ENCODE measurements at regions of chr5 and their contacts with region 1.

Region 1: DNA sequence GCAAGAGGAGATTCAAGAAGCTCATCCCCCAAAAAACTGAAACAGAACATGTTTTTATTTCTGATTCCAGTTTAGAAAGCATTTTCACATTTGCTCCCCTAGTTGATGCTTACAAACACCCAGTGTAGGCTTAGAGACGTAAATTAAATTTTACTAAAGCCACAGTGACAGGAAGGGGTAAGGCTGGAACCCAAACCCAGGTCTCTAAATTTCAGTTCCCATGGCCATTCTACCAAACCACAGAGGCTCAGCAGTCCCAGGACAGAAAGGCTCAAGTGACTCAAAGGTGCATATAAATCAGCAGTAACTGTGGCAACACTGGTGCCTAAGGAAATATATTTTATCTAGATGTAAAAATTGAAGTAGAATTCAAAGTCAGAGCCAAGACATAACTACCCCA is 128.7 kb downstream of the CEP120 start:
- DNase-seq: no peak
- ATAC-seq: no peak
- H3K4me3 ChIP-seq: no peak overlapping the region
- H3K27ac ChIP-seq: peak overlapping the region in 1 of 2 donors; percentile 57
- H3K4me1 ChIP-seq: peaks cover 0 to 8% of the 10 kb centered on the region in 2 donors
- H3K27me3 ChIP-seq: no peaks in the 10 kb centered on the region

Region 2: GRCh38 chr5:123359454-123360200 is 65.1 kb after region 1 on chr5:
- intact Hi-C with region 1: loop called in 1 of 2 experiments (anchors 5 kb)
- DNase-seq: no peak
- ATAC-seq: peak; percentile 88
- H3K4me3 ChIP-seq: no peak overlapping the region
- H3K27ac ChIP-seq: no peak overlapping the region
- H3K4me1 ChIP-seq: peaks cover 0 to 7% of the 10 kb centered on the region in 2 donors
- H3K27me3 ChIP-seq: no peaks in the 10 kb centered on the region

Measured in aorta (tissue), 5 donors.